GM18951 (cell line): ENCODE measurements at regions of chr10 and their contacts with region 1.

Region 1: GRCh38 chr10:4953405-4953804 is 9.8 kb upstream of the AKR1C1 start:
- POLR2A ChIP-seq: no peak

Region 2: GRCh38 chr10:5013385-5013784 is 60.0 kb after region 1 on chr10:
- in situ Hi-C with region 1: loop called (anchors 5 kb)
- POLR2A ChIP-seq: no peak

Region 3: DNA sequence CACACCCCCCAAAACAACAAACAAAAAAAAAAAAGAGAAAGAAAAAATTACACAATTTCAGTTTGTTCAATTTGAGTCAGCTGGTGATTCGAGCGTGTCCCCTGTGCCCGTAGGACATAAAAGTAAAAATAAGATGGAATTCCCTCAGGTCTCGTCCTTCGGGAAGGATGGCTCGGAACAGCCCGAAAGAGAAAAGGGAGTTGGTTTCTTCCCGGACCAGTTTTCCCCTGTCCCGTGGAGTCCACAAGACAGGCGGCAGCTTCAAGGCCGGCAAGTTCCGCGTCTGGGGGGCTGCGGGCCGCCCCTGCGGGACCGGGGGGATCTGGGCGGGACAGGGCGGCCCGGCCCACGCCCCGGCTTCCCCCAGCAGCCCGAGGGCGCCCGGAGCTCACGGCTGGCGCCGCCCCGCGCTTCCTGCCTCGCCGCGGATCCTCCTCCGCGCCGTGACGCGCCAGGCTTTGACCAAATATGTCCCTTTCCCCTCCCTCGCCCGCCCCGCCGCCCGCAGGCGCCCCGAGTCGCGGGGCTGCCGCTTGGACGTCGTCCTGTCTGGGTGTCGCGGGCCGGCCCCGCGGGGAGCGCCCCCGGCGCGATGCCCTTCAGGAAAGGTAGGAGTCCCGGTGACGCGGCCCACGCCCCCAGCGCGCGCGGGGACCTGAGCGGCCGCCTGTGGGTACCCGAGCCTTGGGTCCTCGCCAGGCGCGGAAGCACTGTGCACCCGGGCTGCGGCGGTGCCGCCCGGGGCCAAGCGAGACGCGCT is 1191.2 kb after region 1 on chr10:
- in situ Hi-C with region 1: no loop called
- POLR2A ChIP-seq: peak; percentile 81